OCI-LY7 (cell line): ENCODE measurements at regions of chr14 and their contacts with region 1.

Region 1: GRCh38 chr14:68911594-68912227 is 67.4 kb downstream of the ACTN1 start:
- DNase-seq: peak; percentile 82
- H3K4me3 ChIP-seq: no peak overlapping the region
- H3K27ac ChIP-seq: no peak overlapping the region
- H3K4me1 ChIP-seq: no peaks in the 10 kb centered on the region
- CTCF ChIP-seq: peak; percentile 100

Region 2: DNA sequence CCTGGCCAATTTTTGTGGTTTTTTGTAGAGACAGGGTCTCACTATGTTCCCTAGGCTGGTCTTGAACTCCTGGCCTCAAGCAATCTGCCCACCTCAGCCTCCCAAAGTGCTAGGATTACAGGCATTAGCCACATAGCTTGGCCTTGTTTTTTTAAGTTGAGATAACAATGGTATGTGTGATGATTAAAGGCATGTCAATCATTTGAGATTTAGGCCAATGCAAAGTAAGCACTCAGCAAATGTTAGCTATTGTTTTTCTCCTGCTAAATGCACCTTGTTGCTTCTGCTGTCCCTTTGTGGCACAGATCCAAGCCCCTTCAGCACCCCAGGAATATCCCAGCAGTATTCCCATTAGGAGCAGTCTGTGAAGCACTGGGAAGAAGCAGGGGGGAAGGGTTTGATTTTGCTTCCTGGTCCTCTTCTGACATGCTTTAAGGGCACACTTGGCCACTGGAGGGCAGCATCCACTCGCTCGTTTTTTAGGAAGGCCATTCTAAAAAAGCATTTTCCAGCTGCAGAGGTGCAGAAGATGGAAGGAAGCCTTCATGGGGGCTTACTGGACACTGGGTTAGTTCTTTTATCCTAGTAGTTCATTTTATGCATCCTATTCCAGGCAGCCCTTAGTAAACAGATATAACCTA is 48.6 kb before region 1 on chr14:
- CTCF ChIA-PET with region 1: no interaction called
- POLR2A ChIA-PET with region 1: no interaction called
- intact Hi-C with region 1: loop called (anchors 2 kb)
- DNase-seq: peak; percentile 79
- H3K4me3 ChIP-seq: no peak overlapping the region
- H3K27ac ChIP-seq: no peak overlapping the region
- H3K4me1 ChIP-seq: no peaks in the 10 kb centered on the region
- CTCF ChIP-seq: peak; percentile 92

Region 3: GRCh38 chr14:69013943-69014775 is 102.4 kb after region 1 on chr14:
- CTCF ChIA-PET with region 1: no interaction called
- POLR2A ChIA-PET with region 1: interaction called, 3 read pairs
- intact Hi-C with region 1: loop called (anchors 10 kb)
- DNase-seq: no peak
- H3K4me3 ChIP-seq: no peak overlapping the region
- H3K27ac ChIP-seq: no peak overlapping the region
- H3K4me1 ChIP-seq: no peaks in the 10 kb centered on the region
- CTCF ChIP-seq: no peak

Region 4: DNA sequence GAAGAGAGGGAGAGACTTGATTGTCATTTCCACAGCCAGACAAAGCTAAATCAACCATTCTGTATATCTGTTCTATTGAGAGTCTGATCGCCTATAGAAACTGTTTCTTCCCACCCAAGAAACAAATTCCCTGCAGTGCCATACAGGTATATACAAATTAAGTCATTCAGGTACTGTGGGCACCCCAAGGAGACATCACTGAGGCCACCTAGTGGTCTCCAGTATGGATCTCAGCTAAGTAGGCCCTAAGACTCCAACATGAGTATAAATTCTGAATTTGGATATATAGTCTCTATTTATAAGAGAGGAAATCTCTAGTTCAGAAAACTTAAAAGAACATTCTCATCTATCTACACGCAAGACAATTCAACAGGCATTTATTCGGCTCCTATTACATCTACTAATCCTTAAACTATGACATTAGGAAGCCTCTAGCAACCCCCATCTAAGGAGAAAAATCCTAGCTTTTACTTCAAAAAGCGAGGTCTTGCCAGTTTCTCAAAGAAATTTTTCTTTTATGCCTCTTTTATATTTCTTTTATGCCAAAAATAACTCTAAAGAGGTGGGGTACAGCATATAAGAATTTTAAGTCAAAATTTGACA is 178.6 kb after region 1 on chr14:
- CTCF ChIA-PET with region 1: no interaction called
- POLR2A ChIA-PET with region 1: no interaction called
- intact Hi-C with region 1: loop called (anchors 5 kb)
- DNase-seq: peak; percentile 33
- H3K4me3 ChIP-seq: no peak overlapping the region
- H3K27ac ChIP-seq: no peak overlapping the region
- H3K4me1 ChIP-seq: no peaks in the 10 kb centered on the region
- CTCF ChIP-seq: peak; percentile 82

Region 5: GRCh38 chr14:69107407-69108003 is 195.8 kb after region 1 on chr14:
- CTCF ChIA-PET with region 1: no interaction called
- POLR2A ChIA-PET with region 1: no interaction called
- intact Hi-C with region 1: loop called (anchors 1 kb)
- DNase-seq: peak; percentile 51
- H3K4me3 ChIP-seq: no peak overlapping the region
- H3K27ac ChIP-seq: no peak overlapping the region
- H3K4me1 ChIP-seq: no peaks in the 10 kb centered on the region
- CTCF ChIP-seq: peak; percentile 79